ENCODE measurements at regions of chr2 and their contacts with region 1.

Region 1: GRCh38 chr2:42865884-42866881 is 73.8 kb upstream of the HAAO start:
- DNase-seq: no peak
- ATAC-seq: peak; percentile 44 to 63
- H3K4me3 ChIP-seq: no peak overlapping the region
- H3K27ac ChIP-seq: peak overlapping the region; percentile 72
- H3K4me1 ChIP-seq: peaks cover 15% of the 10 kb centered on the region
- H3K27me3 ChIP-seq: no peaks in the 10 kb centered on the region
- CTCF ChIP-seq: no peak

Region 2: GRCh38 chr2:42652086-42652485 is 214.1 kb before region 1 on chr2:
- intact Hi-C with region 1: no loop called
- DNase-seq: no peak
- ATAC-seq: no peak
- H3K4me3 ChIP-seq: no peak overlapping the region
- H3K27ac ChIP-seq: no peak overlapping the region
- H3K4me1 ChIP-seq: peaks cover 11% of the 10 kb centered on the region
- H3K27me3 ChIP-seq: no peaks in the 10 kb centered on the region
- CTCF ChIP-seq: no peak

Region 3: DNA sequence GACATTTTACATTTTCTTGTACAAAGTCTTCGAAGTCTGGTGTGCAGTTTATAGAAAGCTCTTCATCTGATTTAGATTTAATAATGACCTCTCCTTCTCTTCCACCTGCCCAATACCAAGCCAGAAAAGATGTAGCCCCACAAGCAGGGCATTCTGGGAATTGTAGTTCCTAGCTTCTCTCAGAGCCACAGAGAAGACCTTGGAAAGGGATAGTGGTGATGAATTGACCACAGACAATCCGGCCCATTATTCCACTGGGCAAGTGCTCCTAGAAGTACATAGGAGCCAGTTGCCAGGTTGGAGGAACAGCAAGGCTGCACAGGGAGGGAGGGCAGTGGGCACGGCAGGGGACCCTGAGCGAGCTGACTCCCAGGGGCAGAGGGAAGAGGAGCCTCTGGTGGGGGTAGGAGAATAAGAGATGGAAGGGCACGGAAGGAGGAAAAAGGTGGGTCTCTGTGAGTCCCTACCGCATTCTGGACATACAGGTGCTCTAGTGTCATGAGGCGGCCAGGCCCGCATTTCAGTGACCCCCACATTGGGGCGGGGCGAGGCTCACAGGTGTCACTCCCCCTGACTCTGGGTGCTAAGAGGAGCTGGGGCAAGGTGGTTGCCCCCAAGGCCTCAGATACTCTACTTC is 78.7 kb after region 1 on chr2:
- intact Hi-C with region 1: loop called (anchors 10 kb)
- DNase-seq: no peak
- ATAC-seq: no peak
- H3K4me3 ChIP-seq: no peak overlapping the region
- H3K27ac ChIP-seq: no peak overlapping the region
- H3K4me1 ChIP-seq: peaks cover 14% of the 10 kb centered on the region
- H3K27me3 ChIP-seq: no peaks in the 10 kb centered on the region
- CTCF ChIP-seq: no peak

Measured in lower lobe of right lung (tissue), 2 donors.